Posterior cingulate gyrus (tissue), 11 donors: ENCODE measurements at regions of chr5 and their contacts with region 1.

Region 1: DNA sequence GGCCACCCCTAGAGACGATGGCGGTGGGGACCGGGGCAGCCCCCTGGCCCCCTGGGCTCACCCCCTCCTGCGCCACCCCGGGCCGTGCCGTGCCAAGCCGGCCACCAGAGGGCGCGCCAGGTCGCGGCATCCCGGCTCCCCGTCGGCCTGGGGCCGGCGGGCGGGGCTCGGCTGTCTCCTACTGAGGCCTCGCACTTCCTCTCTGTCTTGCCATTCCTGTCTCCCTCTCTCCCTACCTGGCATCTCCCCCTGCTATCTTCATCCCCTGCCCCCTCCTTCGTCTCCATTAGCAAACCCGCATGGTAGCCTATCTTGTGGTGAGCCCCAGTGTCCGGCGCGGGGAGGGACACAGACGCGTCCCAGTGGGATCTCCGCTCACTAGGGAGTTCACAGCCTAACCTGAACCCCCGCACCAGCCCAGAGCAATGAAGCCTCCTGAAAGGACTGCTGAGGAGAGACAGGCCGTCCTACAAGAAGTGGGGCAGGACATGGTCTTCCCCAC is 29.8 kb upstream of the FABP6 start:
- DNase-seq: peak; percentile 34 to 97 (median 72)

Region 2: DNA sequence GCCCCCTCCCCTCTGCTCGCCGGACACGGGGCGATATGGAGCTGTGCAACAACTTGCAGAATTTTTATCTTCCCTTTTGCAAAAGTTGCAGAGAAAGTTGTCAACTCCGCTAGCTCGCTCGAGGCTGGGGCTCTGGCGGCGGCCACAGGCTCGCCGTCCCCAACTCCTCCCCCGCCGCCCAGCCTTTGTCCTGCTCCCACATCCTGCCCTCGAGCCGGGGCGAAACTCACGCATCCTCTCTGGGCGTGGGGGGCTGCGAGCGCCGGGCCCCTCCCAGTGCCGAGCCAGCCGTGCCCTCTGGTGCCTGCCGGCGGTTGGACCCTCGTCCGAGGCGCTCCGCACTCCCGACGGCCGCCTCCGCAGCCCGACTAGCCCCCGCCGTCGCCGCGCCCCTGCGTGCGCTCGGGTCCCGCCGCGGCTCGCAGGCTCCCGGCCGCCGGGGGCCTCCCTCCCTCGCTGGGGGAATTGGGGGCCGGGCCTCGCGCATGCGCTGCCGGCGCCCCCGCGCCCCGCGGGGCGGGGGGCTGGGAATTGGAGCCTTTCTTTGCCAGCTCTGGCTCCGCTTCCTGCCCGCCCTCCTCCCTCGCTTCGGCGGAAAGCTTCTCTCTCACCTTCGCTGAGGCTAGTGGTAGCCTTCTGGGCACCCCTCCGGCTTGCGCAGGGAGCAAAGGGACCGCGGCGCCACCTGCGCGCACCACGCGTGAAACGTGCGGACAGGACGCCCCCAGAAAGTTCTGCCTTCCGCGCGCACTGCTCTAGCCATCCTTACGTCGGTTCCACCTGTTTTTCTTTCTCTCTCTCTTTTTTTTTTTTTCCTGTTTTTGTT is 112.9 kb after region 1 on chr5 and contains the start of gene CCNJL:
- intact Hi-C with region 1: no loop called
- DNase-seq: peak in 8 of 10 donors; percentile 10 to 87 (median 49)

Region 3: DNA sequence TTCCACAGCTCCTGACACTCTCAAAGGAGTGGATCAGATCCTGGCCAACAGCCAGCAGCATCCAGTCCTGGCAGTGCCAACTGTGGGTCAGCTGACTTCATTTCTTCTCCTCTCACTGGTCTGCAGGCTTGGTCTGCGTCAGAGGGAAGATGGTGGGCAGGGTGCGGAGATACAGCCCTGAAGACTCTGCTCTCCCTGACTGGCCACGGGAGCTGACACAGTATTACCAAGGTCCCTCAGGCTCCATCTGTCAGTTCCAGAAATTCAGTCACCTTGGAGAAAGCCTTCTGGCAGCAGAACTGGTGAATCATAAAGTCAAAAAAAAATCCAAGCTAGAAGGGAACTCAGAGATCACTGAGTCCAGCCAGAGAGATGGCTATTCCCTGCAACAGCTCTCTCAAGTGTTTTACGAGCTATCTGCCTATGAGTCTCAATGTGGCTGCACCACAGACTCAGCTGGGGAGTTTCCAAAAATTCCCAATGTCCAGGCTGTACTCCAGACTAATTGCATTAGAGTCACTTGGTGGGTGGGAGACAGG is 143.0 kb after region 1 on chr5:
- intact Hi-C with region 1: loop called (anchors 1 kb)
- DNase-seq: peak in 1 of 10 donors; percentile 63

Region 4: GRCh38 chr5:160390787-160391696 is 191.6 kb after region 1 on chr5:
- intact Hi-C with region 1: loop called (anchors 5 kb)
- DNase-seq: no peak